Vagina (tissue), 2 donors: ENCODE measurements at regions of chr7 and their contacts with region 1.

Region 1: GRCh38 chr7:115779561-115779960 is 251.0 kb downstream of the TFEC start:
- DNase-seq: no peak
- H3K4me3 ChIP-seq: no peak overlapping the region
- H3K27ac ChIP-seq: no peak overlapping the region
- H3K4me1 ChIP-seq: no peaks in the 10 kb centered on the region
- H3K27me3 ChIP-seq: no peaks in the 10 kb centered on the region
- CTCF ChIP-seq: no peak
- POLR2A ChIP-seq: no peak

Region 2: DNA sequence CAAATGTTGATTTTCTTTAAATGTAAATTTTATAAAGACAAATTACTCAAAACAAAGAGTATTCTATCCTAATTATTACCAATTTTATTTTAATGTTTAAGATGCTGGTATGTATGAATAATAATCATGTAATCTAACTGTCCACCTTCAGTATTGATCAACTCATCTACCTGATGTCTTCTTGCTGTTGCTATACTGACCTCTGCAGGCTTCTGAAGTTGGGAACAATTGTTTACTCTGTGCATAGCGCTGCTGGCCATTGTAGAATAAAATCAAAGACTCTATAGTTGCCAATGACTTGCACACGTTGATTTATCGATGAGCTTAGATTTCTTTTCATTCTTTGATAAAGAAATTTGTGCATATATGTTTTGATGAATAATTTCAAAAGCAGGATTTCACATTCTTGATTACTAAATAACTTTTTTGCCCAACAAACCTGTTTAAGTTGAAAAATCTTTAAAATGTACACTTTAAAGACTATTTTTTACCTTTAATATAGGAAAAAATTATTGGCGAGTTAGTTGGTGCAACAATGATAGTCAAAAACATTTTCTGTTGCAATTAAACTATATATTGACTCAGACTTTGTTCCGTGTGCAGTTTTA is 31.3 kb before region 1 on chr7:
- intact Hi-C with region 1: no loop called
- DNase-seq: no peak
- H3K4me3 ChIP-seq: no peak overlapping the region
- H3K27ac ChIP-seq: no peak overlapping the region
- H3K4me1 ChIP-seq: no peaks in the 10 kb centered on the region
- H3K27me3 ChIP-seq: no peaks in the 10 kb centered on the region
- CTCF ChIP-seq: no peak
- POLR2A ChIP-seq: no peak

Region 3: GRCh38 chr7:115838829-115839228 is 59.3 kb after region 1 on chr7:
- intact Hi-C with region 1: loop called (anchors 10 kb)
- DNase-seq: no peak
- H3K4me3 ChIP-seq: no peak overlapping the region
- H3K27ac ChIP-seq: no peak overlapping the region
- H3K4me1 ChIP-seq: no peaks in the 10 kb centered on the region
- H3K27me3 ChIP-seq: no peaks in the 10 kb centered on the region
- CTCF ChIP-seq: no peak
- POLR2A ChIP-seq: no peak

Region 4: DNA sequence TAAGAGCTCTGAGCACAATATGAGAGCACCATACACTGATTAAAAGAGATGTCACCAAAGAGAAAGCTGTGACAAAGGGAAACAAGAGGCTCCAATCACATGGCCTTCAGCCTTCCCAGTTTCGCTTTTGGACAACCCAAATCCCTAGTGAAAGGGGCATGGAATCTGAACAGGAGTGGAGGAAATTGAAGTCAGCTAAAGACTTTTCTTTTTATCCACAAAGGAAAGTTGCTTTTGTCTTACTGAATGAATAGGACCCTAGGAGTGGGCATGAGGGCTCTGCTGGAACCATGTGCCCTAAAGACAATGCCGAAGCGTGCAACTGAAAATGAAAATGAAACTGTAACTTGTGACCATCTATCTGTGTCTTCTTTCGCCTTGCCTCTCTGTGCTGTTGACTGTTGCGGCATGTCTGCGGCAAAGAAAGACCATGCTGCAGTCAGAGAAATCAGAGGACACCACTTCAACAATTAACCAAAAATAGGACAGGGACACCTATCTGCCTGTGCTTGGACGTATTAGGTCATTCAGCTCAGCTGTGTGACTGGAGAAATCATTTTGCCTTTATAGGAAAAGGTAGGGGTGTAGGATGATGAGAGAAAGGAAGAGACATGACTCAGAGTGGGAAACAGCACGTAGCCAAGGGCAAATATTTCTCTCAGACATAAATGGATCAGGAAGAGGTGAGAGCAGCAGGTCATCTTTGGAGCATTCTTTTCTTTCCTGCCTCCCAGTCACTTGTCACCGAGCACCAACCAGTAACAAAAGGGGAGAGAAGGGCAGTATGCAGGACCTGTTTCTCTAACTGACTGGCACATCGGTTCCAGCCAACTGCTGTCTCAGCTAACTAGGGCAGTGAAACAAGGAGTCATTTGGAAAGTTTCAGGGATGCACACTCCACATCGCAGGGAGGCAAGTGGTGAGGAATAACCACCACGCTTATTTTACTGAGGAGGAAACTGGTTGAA is 732.3 kb after region 1 on chr7:
- intact Hi-C with region 1: no loop called
- DNase-seq: no peak
- H3K4me3 ChIP-seq: peak overlapping the region; percentile 34 to 42
- H3K27ac ChIP-seq: peak overlapping the region; percentile 82
- H3K4me1 ChIP-seq: peaks cover 10% of the 10 kb centered on the region
- H3K27me3 ChIP-seq: no peaks in the 10 kb centered on the region
- CTCF ChIP-seq: no peak
- POLR2A ChIP-seq: no peak